IMR-90 (cell line): ENCODE measurements at regions of chr18 and their contacts with region 1.

Region 1: GRCh38 chr18:46067431-46068007 is 4.5 kb downstream of the PSTPIP2 start:
- DNase-seq: peak; percentile 40
- ATAC-seq: no peak
- H3K4me3 ChIP-seq: no peak overlapping the region
- H3K27ac ChIP-seq: no peak overlapping the region
- H3K4me1 ChIP-seq: peaks cover 18% of the 10 kb centered on the region
- H3K27me3 ChIP-seq: no peaks in the 10 kb centered on the region
- CTCF ChIP-seq: no peak
- POLR2A ChIP-seq: no peak
- RAD21 ChIP-seq: no peak

Region 2: DNA sequence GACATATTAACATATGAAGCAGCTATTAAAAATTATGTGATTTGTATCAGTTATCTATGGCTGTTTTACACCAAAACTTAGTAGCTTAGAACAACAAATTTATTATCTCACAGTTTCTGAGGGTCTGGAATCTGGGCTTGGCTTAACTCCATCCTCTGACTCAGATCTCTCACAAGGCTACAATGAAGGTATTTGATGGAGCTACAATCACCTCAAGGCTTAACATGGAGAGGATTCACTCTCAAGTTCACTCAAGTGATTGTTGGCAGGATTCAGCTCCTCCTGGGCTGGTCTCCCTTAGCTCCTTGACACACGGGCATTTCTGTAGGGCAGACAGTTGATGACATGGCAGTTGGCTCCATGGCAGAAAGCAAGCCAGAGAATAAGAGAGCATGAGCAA is 585.2 kb before region 1 on chr18:
- CTCF ChIA-PET with region 1: no interaction called
- POLR2A ChIA-PET with region 1: no interaction called
- dilution Hi-C with region 1: no loop called
- in situ Hi-C with region 1: no loop called
- intact Hi-C with region 1: no loop called
- DNase-seq: no peak
- ATAC-seq: no peak
- H3K4me3 ChIP-seq: no peak overlapping the region
- H3K27ac ChIP-seq: no peak overlapping the region
- H3K4me1 ChIP-seq: no peaks in the 10 kb centered on the region
- H3K27me3 ChIP-seq: no peaks in the 10 kb centered on the region; the same call in 1 of the 2 replicates
- CTCF ChIP-seq: no peak
- POLR2A ChIP-seq: no peak
- RAD21 ChIP-seq: no peak

Region 3: GRCh38 chr18:45793306-45793965 is 274.1 kb before region 1 on chr18:
- CTCF ChIA-PET with region 1: no interaction called
- POLR2A ChIA-PET with region 1: no interaction called
- dilution Hi-C with region 1: no loop called
- in situ Hi-C with region 1: no loop called
- intact Hi-C with region 1: no loop called
- DNase-seq: peak; percentile 93
- ATAC-seq: peak; percentile 87
- H3K4me3 ChIP-seq: no peak overlapping the region
- H3K27ac ChIP-seq: peak overlapping the region; percentile 94
- H3K4me1 ChIP-seq: peaks cover 8% of the 10 kb centered on the region
- H3K27me3 ChIP-seq: no peaks in the 10 kb centered on the region
- CTCF ChIP-seq: no peak
- POLR2A ChIP-seq: no peak
- RAD21 ChIP-seq: peak; percentile 2; the same call in 1 of the 2 replicates

Region 4: GRCh38 chr18:46054956-46055837 is 12.3 kb before region 1 on chr18:
- CTCF ChIA-PET with region 1: no interaction called
- POLR2A ChIA-PET with region 1: no interaction called
- dilution Hi-C with region 1: no loop called
- in situ Hi-C with region 1: no loop called
- intact Hi-C with region 1: loop called (anchors 1 kb)
- DNase-seq: no peak
- ATAC-seq: no peak
- H3K4me3 ChIP-seq: no peak overlapping the region
- H3K27ac ChIP-seq: no peak overlapping the region
- H3K4me1 ChIP-seq: peaks cover 8% of the 10 kb centered on the region
- H3K27me3 ChIP-seq: no peaks in the 10 kb centered on the region
- CTCF ChIP-seq: no peak
- POLR2A ChIP-seq: no peak
- RAD21 ChIP-seq: no peak